ENCODE measurements at regions of chr16 and their contacts with region 1.

Region 1: GRCh38 chr16:69253870-69254341 is 57.2 kb upstream of the VPS4A start:
- DNase-seq: no peak
- H3K4me3 ChIP-seq: no peak overlapping the region
- H3K27ac ChIP-seq: no peak overlapping the region
- H3K4me1 ChIP-seq: peaks cover 5% of the 10 kb centered on the region
- H3K27me3 ChIP-seq: no peaks in the 10 kb centered on the region
- CTCF ChIP-seq: no peak

Region 2: GRCh38 chr16:68800257-68800875 is 453.5 kb before region 1 on chr16:
- CTCF ChIA-PET with region 1: no interaction called
- POLR2A ChIA-PET with region 1: interaction called, 11 read pairs
- intact Hi-C with region 1: no loop called
- DNase-seq: peak; percentile 80
- H3K4me3 ChIP-seq: no peak overlapping the region
- H3K27ac ChIP-seq: no peak overlapping the region
- H3K4me1 ChIP-seq: no peaks in the 10 kb centered on the region
- H3K27me3 ChIP-seq: no peaks in the 10 kb centered on the region
- CTCF ChIP-seq: peak; percentile 80

Region 3: GRCh38 chr16:69029121-69029520 is 224.8 kb before region 1 on chr16:
- CTCF ChIA-PET with region 1: no interaction called
- POLR2A ChIA-PET with region 1: interaction called, 13 read pairs
- intact Hi-C with region 1: no loop called
- DNase-seq: no peak
- H3K4me3 ChIP-seq: no peak overlapping the region
- H3K27ac ChIP-seq: no peak overlapping the region
- H3K4me1 ChIP-seq: no peaks in the 10 kb centered on the region
- H3K27me3 ChIP-seq: no peaks in the 10 kb centered on the region
- CTCF ChIP-seq: no peak

Region 4: DNA sequence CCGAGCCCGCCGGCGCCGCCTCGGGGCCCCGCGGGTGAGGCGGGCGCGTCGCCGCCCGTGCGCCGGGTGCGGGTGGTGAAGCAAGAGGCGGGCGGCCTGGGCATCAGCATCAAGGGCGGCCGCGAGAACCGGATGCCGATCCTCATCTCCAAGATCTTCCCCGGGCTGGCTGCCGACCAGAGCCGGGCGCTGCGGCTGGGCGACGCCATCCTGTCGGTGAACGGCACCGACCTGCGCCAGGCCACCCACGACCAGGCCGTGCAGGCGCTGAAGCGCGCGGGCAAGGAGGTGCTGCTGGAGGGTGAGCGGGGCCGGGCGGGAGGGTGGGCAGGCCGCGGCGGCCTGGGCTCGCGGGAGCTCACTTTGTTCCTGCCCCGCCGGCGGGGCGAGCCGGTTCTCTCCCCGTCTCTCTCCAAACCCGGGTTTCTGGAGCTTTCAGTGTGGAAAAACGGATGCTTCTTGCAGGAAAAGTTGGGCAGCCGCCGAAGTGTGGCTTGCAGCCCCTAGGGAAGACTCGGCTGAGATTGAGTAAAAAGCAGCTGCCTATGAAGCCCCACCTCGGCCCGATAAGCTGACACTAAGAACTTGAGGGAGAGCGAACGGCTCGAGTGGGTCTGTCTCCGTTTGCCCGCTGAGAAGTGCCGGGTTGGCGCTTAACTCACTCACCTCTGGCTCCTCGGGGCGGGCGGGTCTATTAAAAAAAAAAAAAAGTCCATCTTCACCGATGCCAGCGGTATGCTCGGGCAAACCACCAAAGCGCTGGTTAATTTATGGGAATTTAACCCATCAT is 66.3 kb before region 1 on chr16:
- CTCF ChIA-PET with region 1: no interaction called
- POLR2A ChIA-PET with region 1: no interaction called
- intact Hi-C with region 1: no loop called
- DNase-seq: peak; percentile 61
- H3K4me3 ChIP-seq: peak overlapping the region; percentile 79
- H3K27ac ChIP-seq: peak overlapping the region; percentile 83
- H3K4me1 ChIP-seq: peaks cover 24% of the 10 kb centered on the region
- H3K27me3 ChIP-seq: no peaks in the 10 kb centered on the region
- CTCF ChIP-seq: no peak

Region 5: GRCh38 chr16:69330286-69331109 is 76.6 kb after region 1 on chr16 and contains the start of gene PDF:
- CTCF ChIA-PET with region 1: no interaction called
- POLR2A ChIA-PET with region 1: no interaction called
- intact Hi-C with region 1: no loop called
- DNase-seq: peak; percentile 97
- H3K4me3 ChIP-seq: peak within 1 kb of the TSS; percentile 69
- H3K27ac ChIP-seq: peak within 1 kb of the TSS; percentile 91
- H3K4me1 ChIP-seq: peaks cover 18% of the 10 kb centered on the region
- H3K27me3 ChIP-seq: no peaks in the 10 kb centered on the region
- CTCF ChIP-seq: no peak
- total RNA-seq, gene PDF: 24.8 and 32.4 TPM in 2 replicates